Activated CD4-positive, alpha-beta T cell treated with anti-CD3 and anti-CD28 coated beads, Interleukin-2, amount 10 ng/mL, durations not matched to agents 24 days and 14 days (primary cell): ENCODE measurements at regions of chr4 and their contacts with region 1.

Region 1: GRCh38 chr4:99088481-99089365 is at the start of gene ADH5:
- DNase-seq: peak; percentile 95
- H3K4me3 Mint-ChIP-seq: peak within 1 kb of the TSS; percentile 90
- H3K27ac Mint-ChIP-seq: peak within 1 kb of the TSS; percentile 96
- H3K4me1 Mint-ChIP-seq: peaks cover 35% of the 10 kb centered on the region
- H3K27me3 Mint-ChIP-seq: peaks cover 1% of the 10 kb centered on the region
- total RNA-seq, gene ADH5: 82.6 and 85.3 TPM in 2 replicates

Region 2: DNA sequence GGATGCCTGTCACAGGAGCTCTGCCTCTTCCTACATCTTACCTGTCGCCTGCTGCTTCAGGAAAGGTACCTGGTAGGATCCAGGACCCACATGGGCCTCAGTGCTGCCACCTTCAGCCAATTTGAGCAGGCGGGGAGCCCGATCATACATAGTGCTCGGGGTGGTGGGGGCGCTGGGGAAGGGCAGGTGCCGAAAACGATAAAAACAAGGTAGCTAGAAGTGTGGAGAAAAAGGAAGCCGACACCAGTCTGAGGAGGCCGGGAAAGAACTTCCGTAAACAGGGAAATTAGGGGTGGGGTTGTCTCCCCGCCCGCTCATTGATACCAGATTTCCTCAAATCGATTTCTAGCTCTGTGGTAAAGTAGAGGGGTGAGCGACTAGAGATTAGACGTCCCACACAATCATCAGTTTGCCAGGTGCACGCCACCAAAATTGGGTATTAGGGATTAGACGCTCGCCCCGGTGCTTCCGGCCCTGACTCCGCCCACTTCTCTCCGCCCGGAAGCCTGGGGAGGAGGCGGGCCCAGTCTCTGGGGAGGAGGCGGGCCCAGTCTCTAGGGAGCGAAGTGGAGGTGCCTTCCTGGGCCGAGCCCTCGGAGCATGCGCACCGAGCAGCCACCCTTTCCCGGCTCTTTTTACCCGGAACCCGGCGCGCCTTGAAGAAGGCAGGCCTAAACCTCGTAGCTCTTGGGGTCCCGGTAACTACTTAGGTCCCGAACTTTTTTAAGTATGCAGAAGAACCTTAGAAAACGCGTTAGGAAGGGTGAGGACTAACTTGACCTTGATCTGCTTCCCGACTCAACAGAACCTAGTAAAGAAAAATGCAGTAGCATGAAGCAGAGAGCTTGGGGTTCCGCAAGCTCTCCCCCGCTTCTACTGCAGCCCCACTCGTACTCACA is 945.5 kb before region 1 on chr4 and contains the start of gene STPG2:
- intact Hi-C with region 1: loop called (anchors 2 kb)
- DNase-seq: peak; percentile 98
- H3K4me3 Mint-ChIP-seq: peak within 1 kb of the TSS; percentile 95
- H3K27ac Mint-ChIP-seq: peak within 1 kb of the TSS; percentile 96
- H3K4me1 Mint-ChIP-seq: peaks cover 11% of the 10 kb centered on the region
- H3K27me3 Mint-ChIP-seq: peaks cover 14% of the 10 kb centered on the region
- total RNA-seq, gene STPG2: not detected in 2 replicates

Region 3: GRCh38 chr4:99190336-99190735 is 101.6 kb after region 1 on chr4:
- intact Hi-C with region 1: no loop called
- DNase-seq: no peak
- H3K4me3 Mint-ChIP-seq: no peak overlapping the region
- H3K27ac Mint-ChIP-seq: no peak overlapping the region
- H3K4me1 Mint-ChIP-seq: no peaks in the 10 kb centered on the region
- H3K27me3 Mint-ChIP-seq: no peaks in the 10 kb centered on the region